MCF 10A (cell line): ENCODE measurements at regions of chr19 and their contacts with region 1.

Region 1: GRCh38 chr19:44570984-44571684 is 41.7 kb upstream of the CEACAM20 start:
- DNase-seq: peak; percentile 90
- H3K4me3 Mint-ChIP-seq: no peak overlapping the region
- H3K27ac Mint-ChIP-seq: no peak overlapping the region
- H3K4me1 Mint-ChIP-seq: peaks cover 6% of the 10 kb centered on the region
- H3K27me3 Mint-ChIP-seq: peaks cover 30% of the 10 kb centered on the region
- CTCF ChIP-seq: peak; percentile 78

Region 2: GRCh38 chr19:44071824-44072542 is 499.2 kb before region 1 on chr19 and contains the start of gene ZNF284:
- CTCF ChIA-PET with region 1: no interaction called
- POLR2A ChIA-PET with region 1: no interaction called
- intact Hi-C with region 1: no loop called
- DNase-seq: peak; percentile 92
- H3K4me3 Mint-ChIP-seq: peak within 1 kb of the TSS; percentile 83
- H3K27ac Mint-ChIP-seq: peak within 1 kb of the TSS; percentile 84
- H3K4me1 Mint-ChIP-seq: peaks cover 17% of the 10 kb centered on the region
- H3K27me3 Mint-ChIP-seq: no peaks in the 10 kb centered on the region
- CTCF ChIP-seq: no peak
- total RNA-seq, gene ZNF284: 2.5 and 3.8 TPM in 2 replicates

Region 3: DNA sequence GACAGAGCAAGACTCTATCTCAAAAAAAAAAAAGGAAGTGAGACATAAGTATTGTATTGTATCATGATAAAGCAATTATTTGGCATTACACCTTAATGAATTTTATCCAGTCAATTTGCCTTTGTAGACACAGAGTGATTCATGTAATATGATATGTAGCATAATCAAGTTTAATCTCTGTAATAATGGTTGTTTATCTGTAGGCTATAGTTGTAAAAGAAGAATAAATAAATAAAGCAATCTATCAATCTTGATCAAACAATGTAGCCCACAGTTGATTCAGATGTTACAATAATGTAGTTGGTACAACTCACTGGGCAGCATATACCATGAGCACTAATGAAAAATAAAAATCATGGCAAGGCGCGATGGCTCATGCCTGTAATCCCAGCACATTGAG is 13.2 kb before region 1 on chr19:
- CTCF ChIA-PET with region 1: no interaction called
- POLR2A ChIA-PET with region 1: no interaction called
- intact Hi-C with region 1: no loop called
- DNase-seq: no peak
- H3K4me3 Mint-ChIP-seq: no peak overlapping the region
- H3K27ac Mint-ChIP-seq: no peak overlapping the region
- H3K4me1 Mint-ChIP-seq: peaks cover 8% of the 10 kb centered on the region
- H3K27me3 Mint-ChIP-seq: peaks cover 18% of the 10 kb centered on the region
- CTCF ChIP-seq: no peak

Region 4: GRCh38 chr19:44603201-44603950 is 32.2 kb after region 1 on chr19:
- CTCF ChIA-PET with region 1: no interaction called
- POLR2A ChIA-PET with region 1: no interaction called
- intact Hi-C with region 1: no loop called
- DNase-seq: peak; percentile 81
- H3K4me3 Mint-ChIP-seq: no peak overlapping the region
- H3K27ac Mint-ChIP-seq: no peak overlapping the region
- H3K4me1 Mint-ChIP-seq: peaks cover 11% of the 10 kb centered on the region
- H3K27me3 Mint-ChIP-seq: peaks cover 27% of the 10 kb centered on the region
- CTCF ChIP-seq: no peak

Region 5: DNA sequence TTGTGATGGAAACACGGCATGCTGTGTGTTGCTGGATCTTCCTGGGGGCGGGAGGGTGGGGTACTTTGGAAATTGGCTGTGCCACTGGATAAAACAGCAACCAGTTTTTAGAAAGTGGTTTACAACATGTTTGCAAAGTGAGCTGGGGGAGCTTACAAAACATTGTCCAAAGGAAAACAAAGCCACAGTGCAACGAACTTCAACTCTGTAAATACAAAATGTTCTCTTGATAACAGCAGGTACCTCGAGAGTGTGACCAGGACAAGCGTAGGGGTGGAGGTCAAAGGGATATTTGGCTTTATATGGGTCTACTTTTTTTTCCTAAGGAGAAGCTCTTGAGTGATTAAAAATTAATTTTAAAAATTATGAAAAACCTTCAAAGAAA is 44.7 kb after region 1 on chr19:
- CTCF ChIA-PET with region 1: interaction called, 10 read pairs
- POLR2A ChIA-PET with region 1: no interaction called
- intact Hi-C with region 1: no loop called
- DNase-seq: no peak
- H3K4me3 Mint-ChIP-seq: no peak overlapping the region
- H3K27ac Mint-ChIP-seq: no peak overlapping the region
- H3K4me1 Mint-ChIP-seq: no peaks in the 10 kb centered on the region
- H3K27me3 Mint-ChIP-seq: no peaks in the 10 kb centered on the region
- CTCF ChIP-seq: no peak

Region 6: GRCh38 chr19:44643605-44644401 is 72.7 kb after region 1 on chr19 and contains the start of gene PVR:
- CTCF ChIA-PET with region 1: interaction called, 12 read pairs
- POLR2A ChIA-PET with region 1: interaction called, 4 read pairs
- intact Hi-C with region 1: no loop called
- DNase-seq: peak; percentile 82
- H3K4me3 Mint-ChIP-seq: peak within 1 kb of the TSS; percentile 84
- H3K27ac Mint-ChIP-seq: peak within 1 kb of the TSS; percentile 63
- H3K4me1 Mint-ChIP-seq: peaks cover 30% of the 10 kb centered on the region
- H3K27me3 Mint-ChIP-seq: no peaks in the 10 kb centered on the region
- CTCF ChIP-seq: no peak
- total RNA-seq, gene PVR: 140 and 141 TPM in 2 replicates

Region 7: GRCh38 chr19:44770550-44771257 is 199.6 kb after region 1 on chr19:
- CTCF ChIA-PET with region 1: interaction called, 11 read pairs
- POLR2A ChIA-PET with region 1: no interaction called
- intact Hi-C with region 1: loop called (anchors 1 kb)
- DNase-seq: peak; percentile 99
- H3K4me3 Mint-ChIP-seq: peak overlapping the region; percentile 41
- H3K27ac Mint-ChIP-seq: no peak overlapping the region
- H3K4me1 Mint-ChIP-seq: peaks cover 24% of the 10 kb centered on the region
- H3K27me3 Mint-ChIP-seq: no peaks in the 10 kb centered on the region
- CTCF ChIP-seq: peak; percentile 77